ENCODE measurements at regions of chr16 and their contacts with region 1.

Region 1: DNA sequence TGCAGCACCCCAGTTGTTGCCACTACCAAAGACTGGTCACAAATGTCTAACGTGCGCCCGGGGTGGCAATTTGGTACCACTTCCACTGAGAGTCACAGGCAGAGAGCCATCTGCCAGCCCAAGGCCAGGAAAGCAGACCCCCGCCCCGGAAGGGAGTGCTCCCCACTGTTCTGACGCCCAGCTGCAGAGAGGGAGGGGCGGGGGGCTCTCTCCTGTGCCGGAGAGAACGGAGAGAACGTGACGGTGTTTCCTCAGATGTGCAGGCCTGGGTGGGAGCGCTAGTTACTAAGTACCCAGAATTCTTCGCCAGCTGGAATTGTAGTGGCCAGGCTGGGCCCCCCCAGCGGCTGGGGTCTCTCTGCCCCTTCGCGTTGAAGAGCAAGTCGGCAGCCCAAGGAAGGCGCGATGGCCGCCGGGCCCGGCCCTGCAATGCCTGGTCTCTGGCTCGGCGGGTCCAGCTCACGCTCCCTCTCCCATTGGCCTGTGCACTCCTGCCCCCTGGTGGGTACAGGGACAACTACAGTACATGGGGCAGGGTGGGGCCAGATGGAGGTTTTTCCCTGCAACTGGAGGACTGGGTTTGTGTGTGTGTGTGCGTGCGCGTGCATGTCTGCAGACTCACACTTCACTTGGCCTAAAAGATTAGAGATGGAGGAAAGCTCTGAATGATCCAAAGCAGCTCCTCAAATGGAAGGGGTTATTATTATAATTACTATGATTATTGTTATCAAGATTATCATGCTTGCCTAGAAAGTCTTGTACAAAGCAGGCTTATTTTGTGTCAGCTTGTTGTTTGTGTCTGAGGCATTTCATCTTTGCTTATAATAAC is 107.1 kb downstream of the AMFR start:
- DNase-seq: peak; percentile 91
- ATAC-seq: peak; percentile 98

Region 2: GRCh38 chr16:55944377-55944802 is 373.8 kb before region 1 on chr16:
- intact Hi-C with region 1: loop called (anchors 1 kb)
- DNase-seq: peak; percentile 68
- ATAC-seq: peak; percentile 96

Region 3: DNA sequence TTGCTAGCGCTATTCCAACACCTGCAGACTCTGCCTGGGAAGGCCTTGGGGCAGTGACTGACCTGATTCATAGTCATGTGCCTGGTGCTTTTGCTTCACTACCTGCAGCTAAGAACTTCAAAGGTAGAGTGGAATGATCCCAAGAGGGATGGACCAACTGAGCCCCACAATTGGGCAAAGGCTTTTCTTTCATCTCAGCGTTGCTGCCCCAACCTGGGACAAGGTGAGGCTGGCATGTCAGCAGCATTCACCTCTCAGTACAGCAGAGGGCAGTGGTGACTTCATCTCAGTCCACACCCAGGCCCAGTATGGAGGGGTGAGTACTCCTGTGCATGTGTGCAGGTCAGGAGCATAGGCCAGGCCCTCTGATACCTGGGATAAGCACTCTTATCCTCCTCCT is 276.5 kb before region 1 on chr16:
- intact Hi-C with region 1: loop called (anchors 1 kb)
- DNase-seq: peak; percentile 65
- ATAC-seq: peak; percentile 79

Region 4: DNA sequence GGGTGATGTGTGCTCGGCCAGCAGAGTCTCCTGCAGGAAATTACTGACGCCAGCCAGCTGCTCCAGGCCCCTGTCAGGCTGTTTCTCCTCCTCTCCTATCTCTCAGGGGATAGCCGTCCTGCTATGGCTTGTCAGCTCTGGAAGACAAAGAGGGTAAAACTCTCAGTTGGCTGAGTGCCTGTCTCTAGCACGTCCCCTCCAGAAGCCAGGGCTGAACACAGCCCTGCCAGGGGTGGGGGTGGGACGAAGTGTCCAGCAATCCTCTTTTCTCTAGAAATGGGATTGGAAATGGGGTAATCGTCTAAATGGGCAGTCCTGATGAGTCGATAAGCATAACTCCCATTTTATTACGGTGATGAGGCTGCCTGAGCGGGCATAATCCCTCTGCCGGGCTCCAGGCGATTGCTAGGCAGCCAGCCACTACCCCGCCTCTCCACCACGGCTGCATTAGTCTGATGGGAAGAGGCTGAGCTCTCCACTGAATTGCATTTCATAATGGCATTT is 216.0 kb before region 1 on chr16:
- intact Hi-C with region 1: loop called (anchors 10 kb)
- DNase-seq: peak; percentile 77
- ATAC-seq: peak; percentile 94

Region 5: GRCh38 chr16:56257239-56257638 is 61.0 kb before region 1 on chr16:
- intact Hi-C with region 1: loop called (anchors 10 kb)
- DNase-seq: peak; percentile 84
- ATAC-seq: peak; percentile 50

Measured in Right ventricle myocardium inferior (tissue), 1 donor.